ENCODE measurements at regions of chr6 and their contacts with region 1.

Region 1: GRCh38 chr6:44475779-44476434 is 88.4 kb downstream of the CDC5L start:
- DNase-seq: no peak
- H3K4me3 ChIP-seq: no peak overlapping the region
- H3K27me3 ChIP-seq: 0 out of 2 replicates have a peak, but pooled peaks cover 2% of the 10 kb centered on the region
- CTCF ChIP-seq: peak; percentile 98

Region 2: DNA sequence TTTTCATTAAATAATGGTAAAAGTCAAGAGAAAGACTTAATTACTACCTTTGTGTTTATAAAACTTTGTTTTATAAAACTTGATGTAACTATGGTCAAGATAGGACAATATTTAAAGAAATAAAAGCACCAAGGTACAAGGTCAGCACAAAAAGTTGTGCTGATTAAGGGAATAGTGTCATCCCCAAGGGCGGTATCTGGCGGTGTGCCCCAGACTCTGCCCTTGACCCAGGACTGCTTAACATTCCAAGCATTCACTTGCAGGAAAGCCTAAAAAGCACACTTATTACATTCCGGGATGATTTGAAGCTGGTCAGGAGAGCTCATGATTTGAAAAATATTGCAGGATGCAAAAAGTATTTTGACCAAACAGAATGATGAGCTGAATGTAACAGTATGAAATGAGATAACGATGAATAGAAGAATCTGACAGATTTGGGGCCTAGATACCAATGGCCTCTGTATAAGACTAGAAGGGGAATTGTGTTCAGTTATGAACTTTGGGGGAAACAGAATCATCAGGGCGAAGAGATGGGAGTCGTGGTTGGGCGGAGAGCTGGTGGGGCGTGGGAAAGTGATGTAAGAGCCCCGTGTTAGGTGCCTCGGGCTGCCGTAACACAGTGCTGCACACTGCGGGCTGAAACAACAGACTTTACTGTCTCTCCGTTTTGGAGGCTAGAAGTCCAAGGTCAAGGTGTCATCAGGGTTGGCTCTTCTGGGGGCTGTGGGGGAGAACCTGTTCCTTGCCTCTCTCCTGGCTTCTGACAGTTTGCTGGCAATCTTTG is 11.2 kb before region 1 on chr6:
- CTCF ChIA-PET with region 1: interaction called, 36 read pairs
- POLR2A ChIA-PET with region 1: no interaction called
- DNase-seq: no peak
- H3K4me3 ChIP-seq: no peak overlapping the region
- H3K27me3 ChIP-seq: no peaks in the 10 kb centered on the region
- CTCF ChIP-seq: no peak

Region 3: GRCh38 chr6:44569931-44570385 is 94.1 kb after region 1 on chr6:
- CTCF ChIA-PET with region 1: interaction called, 12 read pairs
- POLR2A ChIA-PET with region 1: no interaction called
- DNase-seq: no peak
- H3K4me3 ChIP-seq: no peak overlapping the region
- H3K27me3 ChIP-seq: peaks cover 2% of the 10 kb centered on the region
- CTCF ChIP-seq: no peak

Region 4: GRCh38 chr6:44636561-44637248 is 160.8 kb after region 1 on chr6:
- CTCF ChIA-PET with region 1: interaction called, 36 read pairs
- POLR2A ChIA-PET with region 1: no interaction called
- DNase-seq: no peak
- H3K4me3 ChIP-seq: no peak overlapping the region
- H3K27me3 ChIP-seq: peaks cover 3% of the 10 kb centered on the region
- CTCF ChIP-seq: no peak

Region 5: GRCh38 chr6:44661221-44662008 is 185.5 kb after region 1 on chr6:
- CTCF ChIA-PET with region 1: interaction called, 41 read pairs
- POLR2A ChIA-PET with region 1: no interaction called
- DNase-seq: peak; percentile 89
- H3K4me3 ChIP-seq: no peak overlapping the region
- H3K27me3 ChIP-seq: no peaks in the 10 kb centered on the region
- CTCF ChIP-seq: no peak

Region 6: DNA sequence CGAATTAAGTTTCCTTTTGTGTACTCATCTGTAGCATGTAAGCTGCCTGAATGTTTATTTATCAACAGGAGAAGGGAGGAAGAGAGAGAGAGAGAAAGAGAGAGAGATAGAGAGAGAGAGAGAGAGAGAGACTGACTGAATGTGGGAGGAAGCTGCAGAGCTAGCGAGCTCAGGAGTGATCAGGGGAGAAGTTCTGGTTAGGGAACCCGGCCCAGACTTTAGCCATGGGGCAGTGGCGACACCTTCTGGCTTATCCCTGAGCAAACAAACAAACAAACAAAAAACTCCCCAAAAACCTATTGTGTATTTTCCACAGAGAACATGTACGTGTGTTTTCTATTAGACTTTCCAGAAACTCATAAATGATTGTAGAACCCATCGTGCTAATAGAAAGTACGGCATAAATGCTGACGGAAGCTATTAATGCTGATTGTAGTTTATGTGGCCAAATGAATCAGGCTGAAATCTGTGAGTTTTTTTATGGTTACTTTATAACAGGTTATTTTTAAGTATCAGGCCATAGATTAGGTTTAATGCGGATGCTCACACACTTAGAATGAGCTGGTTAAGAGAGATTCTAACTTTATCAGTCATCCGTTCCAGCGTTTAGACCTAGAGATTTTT is 1446.9 kb after region 1 on chr6:
- CTCF ChIA-PET with region 1: interaction called, 40 read pairs
- POLR2A ChIA-PET with region 1: no interaction called
- DNase-seq: no peak
- H3K4me3 ChIP-seq: no peak overlapping the region
- H3K27me3 ChIP-seq: no peaks in the 10 kb centered on the region
- CTCF ChIP-seq: peak; percentile 85